Dendritic cell treated with granulocyte-macrophage colony-stimulating factor and Interleukin-4, amounts not matched to agents 40 ng/mL and 50 ng/mL, for 4 days (primary cell): ENCODE measurements at regions of chr12 and their contacts with region 1.

Region 1: GRCh38 chr12:69879041-69879960 is 54.3 kb downstream of the MYRFL start:
- H3K4me3 Mint-ChIP-seq: no peak overlapping the region
- H3K27ac Mint-ChIP-seq: no peak overlapping the region
- H3K4me1 Mint-ChIP-seq: peaks cover 7% of the 10 kb centered on the region
- H3K27me3 Mint-ChIP-seq: peaks cover 6% of the 10 kb centered on the region

Region 2: GRCh38 chr12:69751476-69751875 is 127.8 kb before region 1 on chr12:
- intact Hi-C with region 1: no loop called
- H3K4me3 Mint-ChIP-seq: no peak overlapping the region
- H3K27ac Mint-ChIP-seq: no peak overlapping the region
- H3K4me1 Mint-ChIP-seq: no peaks in the 10 kb centered on the region
- H3K27me3 Mint-ChIP-seq: no peaks in the 10 kb centered on the region

Region 3: GRCh38 chr12:70091021-70091521 is 211.8 kb after region 1 on chr12:
- intact Hi-C with region 1: no loop called
- H3K4me3 Mint-ChIP-seq: no peak overlapping the region
- H3K27ac Mint-ChIP-seq: no peak overlapping the region
- H3K4me1 Mint-ChIP-seq: no peaks in the 10 kb centered on the region
- H3K27me3 Mint-ChIP-seq: no peaks in the 10 kb centered on the region

Region 4: GRCh38 chr12:70576346-70577282 is 697.3 kb after region 1 on chr12:
- intact Hi-C with region 1: loop called (anchors 1 kb)
- H3K4me3 Mint-ChIP-seq: no peak overlapping the region
- H3K27ac Mint-ChIP-seq: no peak overlapping the region
- H3K4me1 Mint-ChIP-seq: no peaks in the 10 kb centered on the region
- H3K27me3 Mint-ChIP-seq: peaks cover 1% of the 10 kb centered on the region

Region 5: DNA sequence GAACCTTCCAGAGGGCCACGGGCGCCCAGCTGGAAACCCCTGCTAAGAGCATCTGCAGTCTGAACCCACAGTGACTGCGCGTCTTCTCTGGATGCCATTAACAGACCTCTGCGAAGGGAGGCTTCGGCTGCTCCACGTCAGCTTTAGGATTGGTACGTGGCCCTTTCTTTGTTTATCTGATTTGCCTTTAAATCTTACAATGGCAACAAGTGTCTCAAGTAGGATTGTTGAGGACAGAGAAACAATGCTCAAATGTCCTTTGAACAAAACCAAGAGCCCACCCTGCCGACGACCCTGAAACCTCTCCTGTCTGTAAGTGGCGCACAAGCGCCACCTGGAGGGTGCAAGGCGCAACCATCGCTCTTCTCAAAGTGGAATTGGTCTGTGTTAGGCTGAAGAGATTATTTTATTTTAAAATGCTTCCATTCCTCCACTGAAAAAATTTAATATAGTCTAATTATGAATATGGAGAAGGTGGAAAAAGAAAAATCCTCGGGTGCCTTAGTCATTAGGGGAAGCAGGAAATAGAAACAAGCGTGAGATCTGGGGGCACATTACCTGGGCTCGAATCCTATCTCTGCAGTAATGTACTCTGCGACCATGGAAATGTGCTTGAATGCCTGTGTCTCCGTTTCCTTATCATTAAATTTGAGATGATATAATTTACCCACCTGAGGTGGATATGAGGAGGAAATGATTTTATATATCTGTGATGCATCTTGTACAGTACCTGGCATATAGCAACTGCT is 840.5 kb after region 1 on chr12:
- intact Hi-C with region 1: loop called (anchors 5 kb)
- H3K4me3 Mint-ChIP-seq: no peak overlapping the region
- H3K27ac Mint-ChIP-seq: no peak overlapping the region
- H3K4me1 Mint-ChIP-seq: no peaks in the 10 kb centered on the region
- H3K27me3 Mint-ChIP-seq: peaks cover 16% of the 10 kb centered on the region